Activated CD4-positive, alpha-beta memory T cell treated with anti-CD3 and anti-CD28 coated beads for 36 hours (primary cell): ENCODE measurements at regions of chr5 and their contacts with region 1.

Region 1: GRCh38 chr5:131322926-131323325 is 59.1 kb downstream of the CDC42SE2 start:
- DNase-seq: no peak
- H3K4me3 Mint-ChIP-seq: peak overlapping the region; percentile 1
- H3K27ac Mint-ChIP-seq: peak overlapping the region; percentile 69
- H3K4me1 Mint-ChIP-seq: peaks cover 67% of the 10 kb centered on the region
- H3K27me3 Mint-ChIP-seq: no peaks in the 10 kb centered on the region

Region 2: GRCh38 chr5:131281133-131281867 is 41.6 kb before region 1 on chr5:
- CTCF ChIA-PET with region 1: no interaction called
- POLR2A ChIA-PET with region 1: interaction called, 8 read pairs
- intact Hi-C with region 1: loop called (anchors 2 kb)
- DNase-seq: no peak
- H3K4me3 Mint-ChIP-seq: peak overlapping the region; percentile 68
- H3K27ac Mint-ChIP-seq: peak overlapping the region; percentile 98
- H3K4me1 Mint-ChIP-seq: peaks cover 86% of the 10 kb centered on the region
- H3K27me3 Mint-ChIP-seq: no peaks in the 10 kb centered on the region

Region 3: GRCh38 chr5:131289738-131290137 is 33.2 kb before region 1 on chr5:
- CTCF ChIA-PET with region 1: interaction called, 3 read pairs
- POLR2A ChIA-PET with region 1: interaction called, 9 read pairs
- intact Hi-C with region 1: loop called (anchors 1 kb)
- DNase-seq: peak; percentile 62
- H3K4me3 Mint-ChIP-seq: peak overlapping the region; percentile 75
- H3K27ac Mint-ChIP-seq: peak overlapping the region; percentile 97
- H3K4me1 Mint-ChIP-seq: peaks cover 69% of the 10 kb centered on the region
- H3K27me3 Mint-ChIP-seq: no peaks in the 10 kb centered on the region

Region 4: GRCh38 chr5:131338051-131338453 is 15.1 kb after region 1 on chr5:
- CTCF ChIA-PET with region 1: interaction called, 3 read pairs
- POLR2A ChIA-PET with region 1: no interaction called
- intact Hi-C with region 1: loop called (anchors 2 kb)
- DNase-seq: no peak
- H3K4me3 Mint-ChIP-seq: peak overlapping the region; percentile 73
- H3K27ac Mint-ChIP-seq: peak overlapping the region; percentile 85
- H3K4me1 Mint-ChIP-seq: peaks cover 87% of the 10 kb centered on the region
- H3K27me3 Mint-ChIP-seq: no peaks in the 10 kb centered on the region

Region 5: GRCh38 chr5:131595088-131596033 is 272.4 kb after region 1 on chr5:
- CTCF ChIA-PET with region 1: no interaction called
- POLR2A ChIA-PET with region 1: no interaction called
- intact Hi-C with region 1: no loop called
- DNase-seq: peak; percentile 33
- H3K4me3 Mint-ChIP-seq: no peak overlapping the region
- H3K27ac Mint-ChIP-seq: peak overlapping the region; percentile 52
- H3K4me1 Mint-ChIP-seq: peaks cover 57% of the 10 kb centered on the region
- H3K27me3 Mint-ChIP-seq: no peaks in the 10 kb centered on the region